Activated naive CD4-positive, alpha-beta T cell treated with anti-CD3 and anti-CD28 coated beads for 36 hours (primary cell): ENCODE measurements at regions of chr6 and their contacts with region 1.

Region 1: GRCh38 chr6:122471107-122472021 is at the start of gene SERINC1:
- DNase-seq: peak; percentile 95
- H3K4me3 Mint-ChIP-seq: peak within 1 kb of the TSS; percentile 97
- H3K27ac Mint-ChIP-seq: peak within 1 kb of the TSS; percentile 100
- H3K4me1 Mint-ChIP-seq: peaks cover 37% of the 10 kb centered on the region
- H3K27me3 Mint-ChIP-seq: no peaks in the 10 kb centered on the region
- total RNA-seq, gene SERINC1: 50.1 to 50.4 TPM

Region 2: DNA sequence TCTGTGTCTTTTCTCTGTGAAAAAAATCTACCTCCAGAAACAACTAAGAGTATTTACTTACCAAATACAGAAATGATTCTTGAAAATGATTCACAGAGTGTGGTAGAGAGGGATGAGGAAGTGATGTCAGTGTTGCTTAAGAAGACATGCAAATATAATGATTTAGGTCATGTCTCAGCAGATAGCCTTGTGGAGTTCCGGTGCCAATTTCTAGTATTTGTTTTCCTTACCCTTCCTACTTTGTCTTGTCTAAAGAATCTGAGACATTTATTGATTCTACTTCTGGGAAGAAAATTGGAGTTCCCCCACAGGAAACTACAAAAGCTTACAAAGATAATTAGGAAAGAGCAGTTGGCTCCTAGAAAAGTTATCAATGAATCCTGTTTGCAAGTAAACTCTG is 967.1 kb before region 1 on chr6:
- CTCF ChIA-PET with region 1: no interaction called
- intact Hi-C with region 1: loop called (anchors 5 kb)
- DNase-seq: no peak
- H3K4me3 Mint-ChIP-seq: no peak overlapping the region
- H3K27ac Mint-ChIP-seq: peak overlapping the region; percentile 62
- H3K4me1 Mint-ChIP-seq: peaks cover 16% of the 10 kb centered on the region
- H3K27me3 Mint-ChIP-seq: no peaks in the 10 kb centered on the region

Region 3: DNA sequence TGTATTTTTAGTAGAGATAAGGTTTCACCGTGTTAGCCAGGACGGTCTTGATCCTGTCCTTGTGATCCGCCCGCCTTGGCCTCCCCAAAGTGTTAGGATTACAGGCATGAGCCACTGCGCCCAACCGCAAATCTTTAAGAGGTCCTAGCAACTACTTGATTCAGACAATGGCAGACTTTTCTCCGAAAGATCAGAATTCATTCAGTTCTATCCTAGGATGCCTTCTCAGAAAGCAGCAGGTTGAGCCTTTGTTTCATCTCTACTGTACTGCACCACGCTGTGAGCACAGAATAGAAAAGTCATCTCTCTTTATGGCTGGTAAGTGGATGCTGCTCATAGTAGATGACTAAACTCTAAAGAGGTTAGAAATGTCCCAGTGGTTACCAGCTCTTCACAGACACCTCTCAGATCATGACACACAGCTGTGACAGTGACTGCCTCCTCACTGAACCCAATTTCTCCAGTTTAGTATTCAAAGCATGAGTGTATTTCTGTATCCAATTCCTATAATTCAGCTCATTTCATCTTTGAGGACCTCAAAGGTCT is 77.9 kb before region 1 on chr6:
- CTCF ChIA-PET with region 1: no interaction called
- intact Hi-C with region 1: loop called (anchors 1 kb)
- DNase-seq: peak; percentile 59
- H3K4me3 Mint-ChIP-seq: no peak overlapping the region
- H3K27ac Mint-ChIP-seq: peak overlapping the region; percentile 67
- H3K4me1 Mint-ChIP-seq: peaks cover 17% of the 10 kb centered on the region
- H3K27me3 Mint-ChIP-seq: no peaks in the 10 kb centered on the region

Region 4: GRCh38 chr6:122408702-122409458 is 62.5 kb before region 1 on chr6:
- CTCF ChIA-PET with region 1: no interaction called
- intact Hi-C with region 1: loop called (anchors 1 kb)
- DNase-seq: no peak
- H3K4me3 Mint-ChIP-seq: peak overlapping the region; percentile 72
- H3K27ac Mint-ChIP-seq: peak overlapping the region; percentile 98
- H3K4me1 Mint-ChIP-seq: peaks cover 76% of the 10 kb centered on the region
- H3K27me3 Mint-ChIP-seq: no peaks in the 10 kb centered on the region

Region 5: GRCh38 chr6:122530440-122531046 is 59.2 kb after region 1 on chr6:
- CTCF ChIA-PET with region 1: interaction called, 20 read pairs
- intact Hi-C with region 1: loop called (anchors 1 kb)
- DNase-seq: peak; percentile 67
- H3K4me3 Mint-ChIP-seq: no peak overlapping the region
- H3K27ac Mint-ChIP-seq: no peak overlapping the region
- H3K4me1 Mint-ChIP-seq: no peaks in the 10 kb centered on the region
- H3K27me3 Mint-ChIP-seq: peaks cover 22% of the 10 kb centered on the region

Region 6: GRCh38 chr6:122673343-122673961 is 202.1 kb after region 1 on chr6:
- CTCF ChIA-PET with region 1: no interaction called
- intact Hi-C with region 1: no loop called
- DNase-seq: no peak
- H3K4me3 Mint-ChIP-seq: no peak overlapping the region
- H3K27ac Mint-ChIP-seq: no peak overlapping the region
- H3K4me1 Mint-ChIP-seq: no peaks in the 10 kb centered on the region
- H3K27me3 Mint-ChIP-seq: no peaks in the 10 kb centered on the region

Region 7: DNA sequence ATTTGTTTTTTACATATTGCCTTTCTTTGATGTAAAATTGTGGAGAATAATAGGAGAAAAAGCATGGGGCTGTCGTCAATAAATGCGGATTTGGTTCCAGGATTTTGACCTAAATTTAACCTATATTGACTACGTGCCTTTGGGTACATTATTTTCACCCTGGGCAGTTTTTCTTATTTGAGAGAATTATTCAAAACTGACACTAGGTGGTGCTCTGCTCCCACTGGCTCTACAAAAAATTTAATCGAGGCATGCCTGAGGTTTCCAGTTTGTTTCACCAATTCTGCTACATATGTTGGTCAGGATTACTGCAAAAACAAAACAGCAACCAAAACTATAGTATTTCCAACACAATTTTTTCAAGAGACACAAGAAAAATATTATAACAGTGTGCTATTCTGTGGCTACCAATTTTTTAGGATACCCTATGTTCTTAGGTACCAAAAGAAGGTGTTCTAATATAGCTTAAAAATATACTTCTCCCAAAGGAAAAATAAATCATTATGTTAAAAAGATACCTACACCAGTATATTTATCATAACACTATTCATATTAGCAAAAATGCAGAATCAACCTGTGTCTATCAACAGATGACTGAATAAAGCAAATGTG is 259.5 kb after region 1 on chr6:
- CTCF ChIA-PET with region 1: no interaction called
- intact Hi-C with region 1: loop called (anchors 5 kb)
- DNase-seq: peak; percentile 31
- H3K4me3 Mint-ChIP-seq: no peak overlapping the region
- H3K27ac Mint-ChIP-seq: no peak overlapping the region
- H3K4me1 Mint-ChIP-seq: no peaks in the 10 kb centered on the region
- H3K27me3 Mint-ChIP-seq: peaks cover 19% of the 10 kb centered on the region

Region 8: GRCh38 chr6:122839477-122839876 is 368.1 kb after region 1 on chr6:
- CTCF ChIA-PET with region 1: interaction called, 3 read pairs
- intact Hi-C with region 1: loop called (anchors 1 kb)
- DNase-seq: peak; percentile 72
- H3K4me3 Mint-ChIP-seq: no peak overlapping the region
- H3K27ac Mint-ChIP-seq: no peak overlapping the region
- H3K4me1 Mint-ChIP-seq: no peaks in the 10 kb centered on the region
- H3K27me3 Mint-ChIP-seq: peaks cover 10% of the 10 kb centered on the region